ENCODE measurements at regions of chr12 and their contacts with region 1.

Region 1: DNA sequence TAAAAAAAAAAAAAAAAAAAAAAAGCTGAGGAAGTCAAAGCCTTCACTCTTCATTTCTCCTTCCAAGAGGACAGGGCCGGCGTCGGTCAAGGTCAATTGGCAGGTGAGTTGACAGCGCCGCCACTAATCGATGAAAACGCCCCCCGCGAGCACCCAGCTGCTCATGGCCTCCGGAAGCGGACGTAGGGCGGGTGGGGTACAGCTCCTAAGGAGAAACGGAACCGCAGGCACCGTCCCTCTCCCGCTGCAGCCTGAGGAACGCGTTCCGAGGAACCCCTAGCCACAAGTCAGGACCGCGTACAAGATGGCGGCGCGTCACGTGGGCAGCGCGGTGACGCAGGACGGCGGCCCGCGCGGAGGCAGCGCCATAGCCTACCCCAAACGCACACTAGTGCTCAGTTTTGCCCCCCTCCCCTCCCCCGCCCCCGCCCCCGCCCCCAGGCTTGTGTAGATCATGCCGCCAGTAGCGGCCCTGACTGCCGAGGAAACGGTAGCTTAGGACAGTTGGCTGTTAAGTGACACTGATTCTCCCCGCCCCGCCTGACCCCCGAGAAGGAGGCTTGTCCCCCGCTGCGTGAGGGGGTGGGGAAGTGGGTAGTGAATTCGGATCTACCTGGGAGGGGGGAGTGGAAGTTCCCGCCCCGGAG is at the start of gene ATF1:
- DNase-seq: peak; percentile 93
- ATAC-seq: peak; percentile 94
- H3K4me3 ChIP-seq: peak within 1 kb of the TSS; percentile 71
- H3K27ac ChIP-seq: peak within 1 kb of the TSS; percentile 99
- H3K4me1 ChIP-seq: peaks cover 4% of the 10 kb centered on the region; the same call in 1 of the 2 replicates
- H3K27me3 ChIP-seq: no peaks in the 10 kb centered on the region
- CTCF ChIP-seq: no peak
- POLR2A ChIP-seq: peak; percentile 88
- RAD21 ChIP-seq: no peak
- total RNA-seq, gene ATF1: 20.6 and 21.9 TPM in 2 replicates

Region 2: DNA sequence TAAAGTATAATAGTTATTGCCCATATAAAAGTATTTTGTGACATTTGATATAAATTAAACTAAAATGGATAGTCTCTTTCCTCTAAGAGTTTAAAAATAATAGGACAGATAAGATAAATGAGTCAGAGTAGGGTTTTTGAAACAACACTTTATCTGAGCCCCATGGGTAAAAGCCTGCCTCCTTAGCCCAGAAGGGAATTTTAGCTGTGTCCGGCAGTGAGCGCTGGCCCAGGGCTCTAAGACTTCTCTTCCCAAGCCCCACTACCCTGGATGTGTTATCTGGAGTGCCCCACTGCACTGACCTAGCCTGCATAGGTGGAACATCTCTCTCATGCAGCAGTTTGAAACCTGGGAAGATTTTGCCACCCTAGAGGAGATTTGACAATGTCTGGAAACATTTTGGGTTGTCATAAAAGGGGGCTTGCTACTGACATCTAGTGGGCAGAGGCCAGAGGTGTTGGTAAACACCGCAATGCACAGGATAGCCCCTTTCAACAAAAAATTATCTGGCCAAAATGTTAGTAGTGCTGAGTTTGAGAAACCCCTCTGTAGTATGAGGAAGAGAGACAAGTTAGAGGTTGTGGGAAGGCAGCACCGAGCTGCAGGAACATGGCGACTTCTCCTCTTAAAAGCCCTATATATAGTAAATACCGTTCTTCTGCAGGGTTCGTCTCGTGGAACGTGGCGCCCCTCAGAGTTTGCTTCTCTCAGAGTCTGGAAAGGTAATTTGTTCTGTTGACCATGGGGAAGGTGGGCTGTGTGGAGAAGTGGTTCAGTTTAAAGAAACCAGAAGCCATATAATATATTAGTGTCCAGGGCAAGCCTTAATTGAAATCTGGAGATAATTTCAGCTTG is 29.1 kb before region 1 on chr12:
- CTCF ChIA-PET with region 1: no interaction called
- POLR2A ChIA-PET with region 1: no interaction called
- dilution Hi-C with region 1: no loop called
- in situ Hi-C with region 1: no loop called
- intact Hi-C with region 1: no loop called
- DNase-seq: peak; percentile 33
- ATAC-seq: peak; percentile 44; the same call in 1 of the 2 replicates
- H3K4me3 ChIP-seq: no peak overlapping the region
- H3K27ac ChIP-seq: no peak overlapping the region
- H3K4me1 ChIP-seq: peaks cover 6% of the 10 kb centered on the region
- H3K27me3 ChIP-seq: no peaks in the 10 kb centered on the region
- CTCF ChIP-seq: peak; percentile 53
- POLR2A ChIP-seq: no peak
- RAD21 ChIP-seq: peak; percentile 66

Region 3: GRCh38 chr12:50776749-50777728 is 13.3 kb after region 1 on chr12:
- CTCF ChIA-PET with region 1: interaction called, 14 read pairs
- POLR2A ChIA-PET with region 1: no interaction called
- dilution Hi-C with region 1: no loop called
- in situ Hi-C with region 1: no loop called
- intact Hi-C with region 1: no loop called
- DNase-seq: no peak
- ATAC-seq: no peak
- H3K4me3 ChIP-seq: no peak overlapping the region
- H3K27ac ChIP-seq: no peak overlapping the region
- H3K4me1 ChIP-seq: 0 out of 2 replicates have a peak, but pooled peaks cover 3% of the 10 kb centered on the region
- H3K27me3 ChIP-seq: no peaks in the 10 kb centered on the region
- CTCF ChIP-seq: no peak
- POLR2A ChIP-seq: no peak
- RAD21 ChIP-seq: no peak

Region 4: DNA sequence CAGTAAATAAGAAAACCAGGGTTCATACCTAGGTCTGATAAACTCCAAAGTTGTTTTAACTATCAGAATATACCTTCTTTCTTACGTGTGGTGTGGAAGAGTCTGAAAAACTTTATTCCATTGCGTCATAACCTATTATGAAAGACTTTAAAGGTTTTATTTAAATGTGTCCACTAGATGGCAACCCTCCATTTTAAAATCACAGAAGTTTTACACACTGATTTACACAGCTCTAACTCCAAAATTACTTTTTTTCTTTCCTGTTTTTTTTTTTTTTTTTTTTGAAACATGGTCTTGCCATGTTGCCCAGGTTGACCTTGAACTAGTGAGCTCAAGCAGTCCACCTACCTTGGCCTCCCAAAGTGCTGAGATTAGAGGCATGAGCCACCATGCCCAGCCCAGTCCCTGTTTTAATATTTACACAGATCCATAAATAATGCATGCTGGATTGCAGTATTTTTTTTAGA is 61.6 kb after region 1 on chr12:
- CTCF ChIA-PET with region 1: interaction called, 3 read pairs
- POLR2A ChIA-PET with region 1: no interaction called
- dilution Hi-C with region 1: no loop called
- in situ Hi-C with region 1: no loop called
- intact Hi-C with region 1: loop called (anchors 1 kb)
- DNase-seq: peak; percentile 83
- ATAC-seq: peak; percentile 79
- H3K4me3 ChIP-seq: no peak overlapping the region
- H3K27ac ChIP-seq: no peak overlapping the region
- H3K4me1 ChIP-seq: peaks cover 2% of the 10 kb centered on the region
- H3K27me3 ChIP-seq: no peaks in the 10 kb centered on the region
- CTCF ChIP-seq: peak; percentile 67
- POLR2A ChIP-seq: no peak
- RAD21 ChIP-seq: peak; percentile 67

Region 5: DNA sequence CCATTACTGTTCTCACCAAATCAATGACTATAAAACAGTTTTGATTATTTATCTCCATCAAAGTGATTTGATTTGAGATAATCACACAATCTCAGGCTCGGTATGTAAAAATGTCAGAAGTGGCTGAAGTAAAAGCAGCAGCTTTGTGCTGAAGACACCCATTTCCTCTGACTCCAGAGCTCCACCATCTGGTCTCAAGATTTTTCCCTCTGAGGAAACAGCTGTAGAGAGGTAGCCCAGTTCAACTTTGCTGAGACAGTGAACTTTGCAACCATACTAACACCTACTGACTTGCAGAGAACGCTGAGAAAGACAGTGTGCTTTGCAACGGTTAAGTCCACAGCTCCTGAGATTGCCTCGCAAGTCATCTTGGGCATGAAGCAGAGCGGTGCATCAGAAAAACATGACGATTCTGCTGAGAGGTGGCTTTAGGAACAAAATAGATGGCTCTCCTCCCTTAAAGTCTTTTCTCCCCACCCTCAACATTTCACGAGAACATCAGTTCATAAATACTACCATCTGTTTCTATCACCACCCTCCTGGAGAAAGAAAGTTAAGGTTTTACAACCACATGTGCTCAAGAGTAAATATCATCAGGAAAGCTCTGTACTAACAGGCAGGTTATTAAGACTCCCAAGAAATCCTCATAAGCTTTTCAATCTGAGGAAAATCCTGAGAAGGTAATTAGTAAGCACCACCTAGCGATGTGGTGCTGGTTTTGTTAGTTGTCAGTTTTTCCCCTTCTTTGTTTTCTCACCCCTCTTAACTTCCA is 223.4 kb after region 1 on chr12:
- CTCF ChIA-PET with region 1: interaction called, 28 read pairs
- POLR2A ChIA-PET with region 1: interaction called, 5 read pairs
- dilution Hi-C with region 1: no loop called
- in situ Hi-C with region 1: no loop called
- intact Hi-C with region 1: loop called (anchors 1 kb)
- DNase-seq: peak; percentile 72
- ATAC-seq: peak; percentile 70
- H3K4me3 ChIP-seq: no peak overlapping the region
- H3K27ac ChIP-seq: no peak overlapping the region
- H3K4me1 ChIP-seq: peaks cover 4% of the 10 kb centered on the region; the same call in 1 of the 2 replicates
- H3K27me3 ChIP-seq: no peaks in the 10 kb centered on the region
- CTCF ChIP-seq: peak; percentile 75
- POLR2A ChIP-seq: no peak
- RAD21 ChIP-seq: peak; percentile 74

Region 6: GRCh38 chr12:51025836-51026638 is 262.3 kb after region 1 on chr12 and contains the start of gene SLC11A2:
- CTCF ChIA-PET with region 1: interaction called, 4 read pairs
- POLR2A ChIA-PET with region 1: no interaction called
- dilution Hi-C with region 1: no loop called
- in situ Hi-C with region 1: no loop called
- intact Hi-C with region 1: loop called (anchors 10 kb)
- DNase-seq: peak; percentile 90
- ATAC-seq: peak; percentile 93
- H3K4me3 ChIP-seq: peak within 1 kb of the TSS; percentile 76
- H3K27ac ChIP-seq: peak within 1 kb of the TSS; percentile 95
- H3K4me1 ChIP-seq: peaks cover 6% of the 10 kb centered on the region
- H3K27me3 ChIP-seq: no peaks in the 10 kb centered on the region
- CTCF ChIP-seq: 0 out of 2 replicates have a peak, but pooled peaks have one; percentile 6
- POLR2A ChIP-seq: 0 out of 2 replicates have a peak, but pooled peaks have one; percentile 46
- RAD21 ChIP-seq: 0 out of 2 replicates have a peak, but pooled peaks have one; percentile 1
- total RNA-seq, gene SLC11A2: 45.3 and 48.3 TPM in 2 replicates

Region 7: DNA sequence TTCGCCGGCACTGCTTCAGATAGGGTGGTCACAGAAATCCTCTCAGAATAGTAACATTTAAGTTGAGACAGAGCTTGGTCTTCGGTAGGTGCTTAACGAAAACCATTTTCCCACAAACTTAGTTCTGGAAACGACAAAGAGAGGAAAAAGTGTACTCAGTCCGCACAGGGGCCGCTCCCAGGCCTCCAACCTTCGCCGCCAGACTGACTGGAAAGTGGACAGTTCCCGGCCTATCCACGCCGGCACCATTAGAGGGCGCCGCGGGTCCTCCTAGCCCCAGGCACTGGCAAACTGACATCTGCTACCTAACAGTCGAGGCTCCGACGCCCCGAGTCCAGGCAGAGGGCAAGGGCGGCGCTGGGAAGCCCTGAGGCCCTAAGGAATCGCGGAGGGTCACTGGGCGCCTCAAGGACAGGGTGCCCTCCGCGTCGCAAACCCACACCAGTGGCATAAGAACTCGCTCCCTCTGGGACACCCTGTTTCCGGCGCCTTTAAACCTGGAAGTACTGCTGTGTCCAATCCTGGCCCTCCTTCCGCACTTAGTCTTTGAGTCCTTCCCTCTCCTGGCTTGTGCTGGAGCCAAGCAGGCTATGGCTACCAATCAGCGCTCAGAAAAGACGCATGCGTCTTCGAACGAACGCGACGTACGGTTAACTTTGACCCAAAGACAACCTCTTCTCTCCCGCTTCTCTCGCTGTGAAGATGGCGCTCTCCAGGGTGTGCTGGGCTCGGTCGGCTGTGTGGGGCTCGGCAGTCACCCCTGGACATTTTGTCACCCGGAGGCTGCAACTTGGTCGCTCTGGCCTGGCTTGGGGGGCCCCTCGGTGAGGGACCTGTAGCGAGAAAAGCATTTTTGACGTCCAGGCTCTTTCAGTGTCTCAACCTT is 284.1 kb after region 1 on chr12 and contains the start of gene LETMD1:
- CTCF ChIA-PET with region 1: no interaction called
- POLR2A ChIA-PET with region 1: no interaction called
- dilution Hi-C with region 1: no loop called
- in situ Hi-C with region 1: no loop called
- intact Hi-C with region 1: loop called (anchors 2 kb)
- DNase-seq: peak; percentile 99
- ATAC-seq: peak; percentile 99
- H3K4me3 ChIP-seq: peak within 1 kb of the TSS; percentile 67
- H3K27ac ChIP-seq: peak within 1 kb of the TSS; percentile 92
- H3K4me1 ChIP-seq: no peaks in the 10 kb centered on the region; the same call in 1 of the 2 replicates
- H3K27me3 ChIP-seq: no peaks in the 10 kb centered on the region
- CTCF ChIP-seq: peak; percentile 90
- POLR2A ChIP-seq: peak; percentile 44; the same call in 1 of the 2 replicates
- RAD21 ChIP-seq: peak; percentile 80
- total RNA-seq, gene LETMD1: 16.7 and 27.6 TPM in 2 replicates